Mammary epithelial cell (primary cell): ENCODE measurements at regions of chr2 and their contacts with region 1.

Region 1: DNA sequence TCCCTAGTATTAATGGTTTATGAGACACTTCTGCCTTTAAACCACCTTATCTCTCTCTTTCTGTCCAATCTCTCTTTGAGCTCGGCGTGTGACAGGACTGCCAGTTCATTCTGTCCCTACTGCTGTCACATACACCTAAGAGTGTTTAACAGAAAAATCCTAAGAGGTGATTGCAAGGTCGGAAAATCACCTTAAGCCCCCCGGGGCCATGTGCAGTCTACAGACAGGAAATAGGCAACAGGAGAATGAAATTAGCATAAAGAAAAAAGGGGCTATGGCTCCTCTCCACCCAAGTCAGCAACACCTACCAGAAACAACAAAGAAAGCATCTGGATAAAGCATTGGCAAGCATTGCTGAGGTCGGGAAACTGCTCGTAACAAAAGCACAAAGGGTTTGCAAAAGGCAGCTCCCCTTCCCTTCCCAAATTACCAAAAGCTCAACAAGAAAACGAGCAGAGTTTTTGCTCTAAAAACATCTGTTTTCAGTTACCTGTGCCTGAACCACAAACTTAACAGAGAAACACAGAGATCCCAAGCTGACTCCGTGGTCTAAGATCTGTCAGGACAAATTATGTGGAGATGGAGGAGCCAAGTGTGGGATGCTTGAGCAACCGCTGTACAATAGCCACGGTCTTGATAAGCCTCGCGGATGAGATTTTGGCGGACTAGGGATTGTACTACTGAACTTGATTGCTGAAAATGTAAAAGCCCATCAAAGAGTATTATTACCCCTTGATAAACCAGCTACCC is 30.4 kb downstream of the ANKRD44 start:
- DNase-seq: no peak
- H3K4me3 ChIP-seq: no peak overlapping the region
- H3K27ac ChIP-seq: no peak overlapping the region
- H3K4me1 ChIP-seq: no peaks in the 10 kb centered on the region
- H3K27me3 ChIP-seq: no peaks in the 10 kb centered on the region
- CTCF ChIP-seq: no peak

Region 2: DNA sequence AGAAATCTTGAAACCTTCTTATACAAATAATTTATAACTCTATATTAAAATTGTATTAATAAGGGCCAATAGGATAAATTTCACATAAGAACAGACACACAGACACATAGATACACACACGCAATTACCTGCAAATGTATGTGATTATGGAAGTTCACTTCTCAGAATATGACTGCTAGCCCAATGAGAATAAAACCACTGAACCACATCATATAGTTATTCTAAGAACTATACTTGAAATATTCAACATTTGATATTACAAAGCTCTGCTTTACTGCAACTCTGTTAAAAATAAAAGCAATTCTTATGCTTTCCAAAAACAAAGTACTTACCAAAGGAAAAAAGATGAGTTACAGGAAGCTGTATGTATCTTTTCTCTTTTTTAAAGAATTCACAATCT is 404.8 kb before region 1 on chr2:
- CTCF ChIA-PET with region 1: no interaction called
- dilution Hi-C with region 1: no loop called
- in situ Hi-C with region 1: no loop called
- intact Hi-C with region 1: no loop called
- DNase-seq: no peak
- H3K4me3 ChIP-seq: no peak overlapping the region
- H3K27ac ChIP-seq: no peak overlapping the region
- H3K4me1 ChIP-seq: no peaks in the 10 kb centered on the region
- H3K27me3 ChIP-seq: no peaks in the 10 kb centered on the region
- CTCF ChIP-seq: no peak

Region 3: DNA sequence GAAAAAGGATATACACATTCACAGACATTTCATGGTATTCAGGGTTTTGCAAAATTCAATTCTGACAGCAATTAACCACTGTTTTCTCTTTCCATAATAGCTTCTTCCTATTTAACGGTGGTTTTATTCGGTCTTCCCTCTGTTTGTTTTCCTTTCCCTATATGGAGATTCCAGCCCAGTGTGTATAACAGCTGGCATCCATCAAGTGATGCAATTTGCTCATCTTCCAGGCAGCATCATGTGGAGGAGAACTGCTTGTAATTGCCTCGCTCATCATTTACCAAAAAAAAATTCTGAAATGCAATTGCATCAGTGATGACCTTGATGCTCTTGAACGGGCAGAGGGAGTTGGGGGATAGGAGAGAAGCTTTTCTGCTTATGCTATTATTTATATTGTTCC is 187.7 kb before region 1 on chr2:
- CTCF ChIA-PET with region 1: no interaction called
- dilution Hi-C with region 1: no loop called
- in situ Hi-C with region 1: no loop called
- intact Hi-C with region 1: no loop called
- DNase-seq: no peak
- H3K4me3 ChIP-seq: no peak overlapping the region
- H3K27ac ChIP-seq: no peak overlapping the region
- H3K4me1 ChIP-seq: peaks cover 4% of the 10 kb centered on the region
- H3K27me3 ChIP-seq: no peaks in the 10 kb centered on the region
- CTCF ChIP-seq: no peak

Region 4: GRCh38 chr2:197209742-197210408 is 70.3 kb before region 1 on chr2:
- CTCF ChIA-PET with region 1: no interaction called
- dilution Hi-C with region 1: loop called (anchors 5 kb)
- in situ Hi-C with region 1: no loop called
- intact Hi-C with region 1: no loop called
- DNase-seq: peak; percentile 35
- H3K4me3 ChIP-seq: no peak overlapping the region
- H3K27ac ChIP-seq: no peak overlapping the region
- H3K4me1 ChIP-seq: no peaks in the 10 kb centered on the region
- H3K27me3 ChIP-seq: no peaks in the 10 kb centered on the region
- CTCF ChIP-seq: no peak

Region 5: DNA sequence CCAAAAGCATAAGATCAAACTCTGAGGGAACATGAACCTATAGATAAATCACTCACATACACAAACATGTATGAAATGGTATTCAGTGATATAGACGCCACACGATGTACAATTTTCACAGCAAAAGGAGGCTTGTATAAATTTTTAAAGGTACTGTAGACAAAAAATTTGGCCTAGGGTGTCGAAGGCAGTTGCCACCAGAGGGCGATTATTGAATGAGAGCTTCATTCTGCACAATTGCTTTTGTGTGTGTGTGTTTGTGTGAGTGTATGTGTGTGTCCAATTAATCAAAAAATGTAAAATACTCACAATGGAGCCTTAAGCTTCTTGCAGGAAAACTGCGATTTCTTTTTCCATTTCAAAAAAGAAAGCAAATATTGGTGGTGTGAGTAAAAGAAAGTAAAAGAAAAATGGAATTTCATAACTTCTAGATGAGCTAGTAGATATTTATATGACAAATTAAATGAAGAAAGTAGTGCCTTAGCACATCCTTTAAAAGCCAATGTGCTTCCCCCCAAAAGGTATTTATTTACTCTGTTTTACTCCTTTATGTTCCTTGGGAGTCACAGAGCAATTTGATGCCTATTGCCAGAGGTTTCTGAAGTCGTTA is 1377.4 kb after region 1 on chr2:
- CTCF ChIA-PET with region 1: no interaction called
- dilution Hi-C with region 1: no loop called
- in situ Hi-C with region 1: no loop called
- intact Hi-C with region 1: no loop called
- DNase-seq: peak; percentile 8
- H3K4me3 ChIP-seq: no peak overlapping the region
- H3K27ac ChIP-seq: no peak overlapping the region
- H3K4me1 ChIP-seq: no peaks in the 10 kb centered on the region
- H3K27me3 ChIP-seq: peaks cover 4% of the 10 kb centered on the region
- CTCF ChIP-seq: peak; percentile 37 to 61